ENCODE measurements at regions of chr18 and their contacts with region 1.

Region 1: GRCh38 chr18:70671889-70672565 is 383.2 kb downstream of the SOCS6 start:
- DNase-seq: peak in 2 of 9 donors; percentile 49 to 58
- ATAC-seq: peak; percentile 50
- H3K4me3 ChIP-seq: no peak overlapping the region
- H3K4me3 Mint-ChIP-seq: peak overlapping the region in 8 of 10 donors; percentile 1 to 66 (median 37)
- H3K27ac ChIP-seq: peak overlapping the region; percentile 74
- H3K27ac Mint-ChIP-seq: peak overlapping the region in 8 of 9 donors; percentile 89 to 98 (median 94)
- H3K4me1 ChIP-seq: peaks cover 3 to 52% of the 10 kb centered on the region in 2 donors
- H3K4me1 Mint-ChIP-seq: peaks cover 11 to 68% (median 59%) of the 10 kb centered on the region in 7 donors
- H3K27me3 ChIP-seq: no peaks in the 10 kb centered on the region
- H3K27me3 Mint-ChIP-seq: no peaks in the 10 kb centered on the region

Region 2: DNA sequence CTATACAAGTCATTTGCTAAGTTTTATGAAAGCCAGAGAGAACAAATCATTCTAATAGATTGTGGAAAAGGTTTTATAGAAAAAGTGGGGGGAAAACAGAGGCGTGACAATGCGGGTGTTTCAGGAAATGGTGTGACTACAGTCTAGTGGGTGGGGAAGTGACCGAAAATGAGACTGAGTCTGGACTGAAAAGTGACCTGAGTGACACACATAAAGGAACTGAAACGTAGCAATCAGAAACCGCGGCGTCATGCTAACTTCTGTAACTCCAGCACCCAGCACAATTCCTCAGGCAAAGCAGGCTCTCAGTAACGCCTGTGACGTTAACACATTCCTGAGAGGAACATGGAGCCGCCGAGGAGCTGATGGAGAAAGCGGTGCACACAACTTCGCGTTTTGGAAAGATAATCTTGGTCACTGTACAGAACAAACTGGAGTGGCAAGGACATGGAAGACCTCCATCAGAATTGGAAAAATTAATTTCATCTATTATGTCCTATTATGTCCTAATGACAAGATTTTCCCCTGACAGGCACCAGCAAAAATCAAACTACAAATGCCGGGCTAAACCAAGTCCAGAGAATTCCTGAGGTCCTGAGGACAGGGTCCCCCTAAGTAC is 723.0 kb before region 1 on chr18:
- CTCF ChIA-PET with region 1: no interaction called
- POLR2A ChIA-PET with region 1: no interaction called
- intact Hi-C with region 1: loop called in 1 of 2 experiments (anchors 10 kb)
- DNase-seq: peak in 1 of 9 donors; percentile 53
- ATAC-seq: peak; percentile 73
- H3K4me3 ChIP-seq: peak overlapping the region; percentile 0
- H3K4me3 Mint-ChIP-seq: no peak overlapping the region
- H3K27ac ChIP-seq: peak overlapping the region; percentile 55
- H3K27ac Mint-ChIP-seq: no peak overlapping the region
- H3K4me1 ChIP-seq: peaks cover 45 to 77% of the 10 kb centered on the region in 2 donors
- H3K4me1 Mint-ChIP-seq: peaks cover 12 to 63% (median 42%) of the 10 kb centered on the region in 7 donors
- H3K27me3 ChIP-seq: no peaks in the 10 kb centered on the region
- H3K27me3 Mint-ChIP-seq: no peaks in the 10 kb centered on the region

Region 3: GRCh38 chr18:70659036-70659925 is 12.7 kb before region 1 on chr18:
- CTCF ChIA-PET with region 1: interaction called, 14 read pairs
- POLR2A ChIA-PET with region 1: interaction called, 67 read pairs
- intact Hi-C with region 1: loop called in 1 of 2 experiments (anchors 1 kb)
- DNase-seq: peak in 8 of 9 donors; percentile 13 to 88 (median 86)
- ATAC-seq: peak; percentile 97
- H3K4me3 ChIP-seq: no peak overlapping the region
- H3K4me3 Mint-ChIP-seq: peak overlapping the region in 9 of 10 donors; percentile 43 to 80 (median 71)
- H3K27ac ChIP-seq: peak overlapping the region; percentile 77
- H3K27ac Mint-ChIP-seq: peak overlapping the region in 8 of 9 donors; percentile 93 to 99 (median 97)
- H3K4me1 ChIP-seq: peaks cover 0 to 62% of the 10 kb centered on the region in 2 donors
- H3K4me1 Mint-ChIP-seq: peaks cover 17 to 82% (median 66%) of the 10 kb centered on the region in 7 donors
- H3K27me3 ChIP-seq: no peaks in the 10 kb centered on the region
- H3K27me3 Mint-ChIP-seq: no peaks in the 10 kb centered on the region

Region 4: GRCh38 chr18:70683263-70683662 is 11.2 kb after region 1 on chr18:
- CTCF ChIA-PET with region 1: interaction called, 4 read pairs
- POLR2A ChIA-PET with region 1: interaction called, 40 read pairs
- intact Hi-C with region 1: loop called in 1 of 2 experiments (anchors 1 kb)
- DNase-seq: peak in 7 of 9 donors; percentile 39 to 78 (median 70)
- ATAC-seq: peak; percentile 94
- H3K4me3 ChIP-seq: no peak overlapping the region
- H3K4me3 Mint-ChIP-seq: peak overlapping the region in 9 of 10 donors; percentile 6 to 65 (median 30)
- H3K27ac ChIP-seq: peak overlapping the region; percentile 65
- H3K27ac Mint-ChIP-seq: peak overlapping the region in 8 of 9 donors; percentile 80 to 97 (median 89)
- H3K4me1 ChIP-seq: peaks cover 0 to 15% of the 10 kb centered on the region in 2 donors
- H3K4me1 Mint-ChIP-seq: peaks cover 4 to 37% (median 30%) of the 10 kb centered on the region in 7 donors
- H3K27me3 ChIP-seq: no peaks in the 10 kb centered on the region
- H3K27me3 Mint-ChIP-seq: no peaks in the 10 kb centered on the region

Region 5: DNA sequence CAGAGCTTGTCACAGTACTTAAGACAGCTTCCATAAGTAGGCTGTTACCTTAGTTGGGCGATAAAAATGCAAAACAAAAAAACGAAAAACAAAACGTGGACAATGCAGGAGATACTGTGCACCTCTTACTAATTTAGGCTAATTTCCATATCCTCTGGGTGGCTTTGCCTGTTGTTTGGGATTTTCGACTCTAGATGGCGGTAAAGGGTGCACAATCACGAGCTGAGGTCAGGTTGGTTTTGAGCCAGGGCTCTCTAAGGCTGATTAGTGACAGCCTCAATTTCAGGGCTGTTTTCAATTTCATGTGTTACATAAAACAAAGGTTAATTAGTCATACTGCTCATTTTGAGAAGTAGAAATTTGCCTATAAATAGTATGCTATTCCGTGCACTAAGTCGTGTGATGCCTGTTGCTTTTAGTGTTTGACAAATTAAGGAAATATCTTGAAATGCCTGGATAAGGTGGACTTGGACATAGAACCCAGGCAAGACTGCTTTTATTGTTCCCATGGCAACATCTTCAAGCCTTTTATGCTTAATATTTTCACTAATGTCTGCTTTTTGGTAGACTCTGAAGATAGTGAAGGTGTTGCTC is 109.9 kb after region 1 on chr18:
- CTCF ChIA-PET with region 1: interaction called, 3 read pairs
- POLR2A ChIA-PET with region 1: interaction called, 4 read pairs
- intact Hi-C with region 1: loop called in 1 of 2 experiments (anchors 5 kb)
- DNase-seq: peak; percentile 21 to 76 (median 72)
- ATAC-seq: peak; percentile 96
- H3K4me3 ChIP-seq: no peak overlapping the region
- H3K4me3 Mint-ChIP-seq: peak overlapping the region in 5 of 10 donors; percentile 2 to 60 (median 10)
- H3K27ac ChIP-seq: no peak overlapping the region
- H3K27ac Mint-ChIP-seq: peak overlapping the region in 3 of 9 donors; percentile 22 to 80 (median 77)
- H3K4me1 ChIP-seq: peaks cover 0 to 6% of the 10 kb centered on the region in 2 donors
- H3K4me1 Mint-ChIP-seq: peaks cover 0 to 24% (median 23%) of the 10 kb centered on the region in 7 donors
- H3K27me3 ChIP-seq: no peaks in the 10 kb centered on the region
- H3K27me3 Mint-ChIP-seq: no peaks in the 10 kb centered on the region

Region 6: GRCh38 chr18:70907673-70908072 is 235.6 kb after region 1 on chr18:
- CTCF ChIA-PET with region 1: no interaction called
- POLR2A ChIA-PET with region 1: no interaction called
- intact Hi-C with region 1: no loop called
- DNase-seq: no peak
- ATAC-seq: no peak
- H3K4me3 ChIP-seq: no peak overlapping the region
- H3K4me3 Mint-ChIP-seq: no peak overlapping the region
- H3K27ac ChIP-seq: no peak overlapping the region
- H3K27ac Mint-ChIP-seq: no peak overlapping the region
- H3K4me1 ChIP-seq: no peaks in the 10 kb centered on the region
- H3K4me1 Mint-ChIP-seq: peaks cover 0 to 19% (median 11%) of the 10 kb centered on the region in 7 donors
- H3K27me3 ChIP-seq: no peaks in the 10 kb centered on the region
- H3K27me3 Mint-ChIP-seq: no peaks in the 10 kb centered on the region

Region 7: DNA sequence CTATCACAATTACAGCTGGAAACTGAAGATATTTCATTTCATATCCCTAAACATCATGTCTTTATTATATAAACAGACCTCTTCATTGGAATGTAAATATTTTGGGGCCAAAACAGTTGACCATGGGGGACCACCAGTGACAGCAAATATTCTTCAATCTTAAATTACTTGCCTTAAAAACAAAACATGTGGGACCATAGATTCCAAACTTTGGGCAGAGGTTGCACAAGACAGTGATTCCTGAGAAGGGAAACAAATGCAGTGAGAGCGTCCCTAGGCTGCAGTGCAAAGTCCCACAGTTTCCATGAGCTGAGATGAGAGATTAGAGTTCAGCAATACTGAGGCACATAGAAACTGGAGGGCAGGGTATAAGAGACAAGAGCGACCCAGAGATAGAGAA is 1053.2 kb after region 1 on chr18:
- CTCF ChIA-PET with region 1: no interaction called
- POLR2A ChIA-PET with region 1: no interaction called
- intact Hi-C with region 1: no loop called
- DNase-seq: no peak
- ATAC-seq: no peak
- H3K4me3 ChIP-seq: no peak overlapping the region
- H3K4me3 Mint-ChIP-seq: no peak overlapping the region
- H3K27ac ChIP-seq: no peak overlapping the region
- H3K27ac Mint-ChIP-seq: no peak overlapping the region
- H3K4me1 ChIP-seq: no peaks in the 10 kb centered on the region
- H3K4me1 Mint-ChIP-seq: no peaks in the 10 kb centered on the region
- H3K27me3 ChIP-seq: no peaks in the 10 kb centered on the region
- H3K27me3 Mint-ChIP-seq: peaks cover 0 to 9% (median 0%) of the 10 kb centered on the region in 5 donors